OCI-LY7 (cell line): ENCODE measurements at regions of chr16 and their contacts with region 1.

Region 1: GRCh38 chr16:81445975-81446906 is 1.6 kb downstream of the CMIP start:
- DNase-seq: peak; percentile 36
- H3K4me3 ChIP-seq: peak overlapping the region; percentile 93
- H3K27ac ChIP-seq: peak overlapping the region; percentile 61
- H3K4me1 ChIP-seq: peaks cover 44% of the 10 kb centered on the region
- CTCF ChIP-seq: no peak

Region 2: GRCh38 chr16:81223391-81223829 is 222.8 kb before region 1 on chr16:
- CTCF ChIA-PET with region 1: no interaction called
- POLR2A ChIA-PET with region 1: no interaction called
- intact Hi-C with region 1: no loop called
- DNase-seq: no peak
- H3K4me3 ChIP-seq: no peak overlapping the region
- H3K27ac ChIP-seq: no peak overlapping the region
- H3K4me1 ChIP-seq: no peaks in the 10 kb centered on the region
- CTCF ChIP-seq: no peak

Region 3: DNA sequence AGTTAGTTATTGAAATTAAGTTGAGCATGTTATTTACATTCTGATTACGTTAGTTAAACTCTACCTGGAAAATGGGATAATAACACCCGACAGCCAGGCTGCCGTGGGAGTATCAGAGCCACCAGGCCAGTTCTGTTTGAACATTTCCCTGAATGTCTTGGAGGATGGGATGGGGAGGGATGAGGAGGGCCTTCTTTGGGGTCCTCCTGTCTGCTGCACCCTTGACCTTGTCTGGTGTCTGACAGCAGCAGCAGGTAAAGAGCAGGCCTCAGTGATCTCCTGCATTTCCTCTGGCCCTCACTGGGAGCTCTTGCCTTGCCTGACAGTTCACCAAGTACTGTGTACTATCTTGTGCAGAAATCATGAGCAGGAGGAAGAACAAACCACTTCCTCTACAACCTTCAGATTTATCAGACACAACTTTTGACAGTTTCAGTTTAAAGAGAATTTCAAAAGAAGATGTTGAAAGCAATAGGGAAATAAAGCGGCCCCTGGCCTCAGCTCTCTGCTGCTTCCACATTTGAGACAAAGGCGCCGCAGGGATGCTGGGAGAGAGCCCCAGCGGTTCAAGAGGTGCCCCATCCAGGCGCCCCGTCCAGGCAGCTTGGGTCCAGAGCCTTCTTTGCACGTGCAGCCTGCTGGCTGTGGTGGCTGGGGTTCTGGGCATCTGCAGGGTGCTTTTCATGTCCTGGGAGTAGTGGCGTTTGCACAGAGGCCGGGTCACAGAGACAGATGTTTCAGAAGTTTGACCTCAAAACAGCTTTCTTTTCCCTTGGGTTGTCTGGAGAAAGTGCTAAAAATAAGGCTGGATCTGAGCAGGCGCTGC is 23.7 kb after region 1 on chr16:
- CTCF ChIA-PET with region 1: interaction called, 8 read pairs
- POLR2A ChIA-PET with region 1: interaction called, 4 read pairs
- intact Hi-C with region 1: loop called (anchors 2 kb)
- DNase-seq: peak; percentile 87
- H3K4me3 ChIP-seq: peak overlapping the region; percentile 51
- H3K27ac ChIP-seq: peak overlapping the region; percentile 96
- H3K4me1 ChIP-seq: peaks cover 42% of the 10 kb centered on the region
- CTCF ChIP-seq: 0 out of 2 replicates have a peak, but pooled peaks have one; percentile 21